BJ (cell line): ENCODE measurements at regions of chr17 and their contacts with region 1.

Region 1: DNA sequence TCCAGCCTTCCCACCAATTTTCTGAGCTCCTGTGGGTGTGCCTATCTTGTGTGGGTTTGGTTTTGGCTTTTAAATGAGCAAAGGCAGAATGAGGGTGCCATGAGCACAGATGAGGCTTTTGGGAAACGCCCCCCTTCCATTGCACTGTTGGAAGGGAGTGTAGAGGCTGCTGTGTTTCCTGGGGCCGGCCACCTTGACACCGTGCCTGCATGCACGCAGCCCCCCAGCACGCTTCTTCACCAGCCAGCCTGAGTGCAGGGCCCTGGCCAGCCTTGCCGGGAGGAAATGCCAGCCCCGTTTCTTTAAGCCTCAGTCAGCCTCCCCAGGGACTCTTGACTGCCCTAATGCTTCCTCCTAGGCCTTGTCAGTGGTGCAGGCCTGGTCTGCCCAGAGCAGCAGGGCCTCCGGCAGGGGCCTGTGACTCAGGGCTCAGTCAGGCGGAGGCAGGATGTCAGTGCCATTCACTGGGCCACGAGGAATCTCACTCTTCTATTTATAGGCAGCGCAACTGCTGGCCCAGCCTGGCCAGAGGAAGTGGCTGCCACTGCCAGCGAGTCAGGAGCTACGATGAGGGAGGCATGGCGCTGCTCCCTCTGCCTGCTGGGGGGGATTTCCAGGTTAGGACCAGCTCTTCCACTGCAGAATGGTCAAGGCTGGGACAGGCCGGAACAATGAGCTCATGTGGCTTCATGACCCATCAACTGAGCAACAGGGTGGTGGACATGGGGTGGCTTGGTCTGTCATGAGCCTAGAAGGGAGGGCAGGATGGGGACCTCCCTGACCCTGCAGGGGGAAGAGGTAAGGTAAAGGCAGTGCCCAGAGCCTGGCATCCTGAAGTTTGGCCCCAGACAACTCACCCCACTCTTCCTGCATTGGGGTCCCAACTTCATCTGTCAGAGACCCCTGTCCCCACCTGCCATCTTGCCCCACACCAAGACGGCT is 205.2 kb downstream of the RAB11FIP4 start:
- DNase-seq: peak; percentile 83
- H3K4me3 ChIP-seq: no peak overlapping the region
- H3K27me3 ChIP-seq: no peaks in the 10 kb centered on the region
- CTCF ChIP-seq: 0 out of 2 replicates have a peak, but pooled peaks have one; percentile 12

Region 2: DNA sequence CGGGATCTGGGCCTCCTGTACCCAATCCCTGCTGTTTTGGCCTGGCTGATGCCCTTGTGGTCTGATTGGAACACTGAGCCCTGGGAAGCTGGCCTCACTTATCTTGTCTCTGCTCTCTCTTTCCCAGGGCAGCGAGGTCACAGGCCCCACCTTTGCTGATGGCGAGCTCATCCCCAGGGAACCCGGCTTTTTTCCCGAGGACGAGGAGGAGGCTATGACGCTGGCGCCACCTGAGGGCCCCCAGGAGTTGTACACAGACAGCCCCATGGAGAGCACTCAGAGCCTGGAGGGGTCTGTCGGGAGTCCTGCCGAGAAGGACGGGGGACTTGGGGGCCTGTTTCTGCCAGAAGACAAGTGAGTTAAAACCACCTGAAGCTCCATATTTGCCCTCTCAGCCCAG is 79.1 kb before region 1 on chr17:
- CTCF ChIA-PET with region 1: no interaction called
- POLR2A ChIA-PET with region 1: no interaction called
- DNase-seq: no peak
- H3K4me3 ChIP-seq: no peak overlapping the region
- H3K27me3 ChIP-seq: peaks cover 7% of the 10 kb centered on the region; the same call in 1 of the 2 replicates
- CTCF ChIP-seq: peak; percentile 29; the same call in 1 of the 2 replicates

Region 3: GRCh38 chr17:31609996-31610910 is 13.6 kb after region 1 on chr17:
- CTCF ChIA-PET with region 1: no interaction called
- POLR2A ChIA-PET with region 1: interaction called, 22 read pairs
- DNase-seq: no peak
- H3K4me3 ChIP-seq: no peak overlapping the region
- H3K27me3 ChIP-seq: no peaks in the 10 kb centered on the region
- CTCF ChIP-seq: no peak